Body of pancreas (tissue), 4 donors: ENCODE measurements at regions of chr11 and their contacts with region 1.

Region 1: GRCh38 chr11:46121724-46122477 is 647 bp upstream of the PHF21A start:
- DNase-seq: peak; percentile 81 to 89 (median 84)
- ATAC-seq: peak; percentile 80
- H3K4me3 ChIP-seq: peak overlapping the region; percentile 71 to 90
- H3K27ac ChIP-seq: peak overlapping the region; percentile 86 to 96 (median 92)
- H3K4me1 ChIP-seq: peaks cover 29% of the 10 kb centered on the region
- H3K27me3 ChIP-seq: no peaks in the 10 kb centered on the region
- CTCF ChIP-seq: peak in 1 of 7 experiments; percentile 6
- POLR2A ChIP-seq: peak; percentile 63 to 71 (median 67)

Region 2: GRCh38 chr11:46075168-46075567 is 46.7 kb before region 1 on chr11:
- intact Hi-C with region 1: no loop called
- DNase-seq: peak in 1 of 4 donors; percentile 19
- ATAC-seq: no peak
- H3K4me3 ChIP-seq: no peak overlapping the region
- H3K27ac ChIP-seq: no peak overlapping the region
- H3K4me1 ChIP-seq: no peaks in the 10 kb centered on the region
- H3K27me3 ChIP-seq: no peaks in the 10 kb centered on the region
- CTCF ChIP-seq: no peak
- POLR2A ChIP-seq: no peak

Region 3: GRCh38 chr11:46322759-46323158 is 200.9 kb after region 1 on chr11:
- intact Hi-C with region 1: loop called (anchors 10 kb)
- DNase-seq: peak in 2 of 4 donors; percentile 32 to 47
- ATAC-seq: peak; percentile 53
- H3K4me3 ChIP-seq: no peak overlapping the region
- H3K27ac ChIP-seq: no peak overlapping the region
- H3K4me1 ChIP-seq: no peaks in the 10 kb centered on the region
- H3K27me3 ChIP-seq: no peaks in the 10 kb centered on the region
- CTCF ChIP-seq: peak in 6 of 7 experiments; percentile 10 to 46 (median 36)
- POLR2A ChIP-seq: no peak